Right ventricle myocardium inferior (tissue), 1 donor: ENCODE measurements at regions of chr12 and their contacts with region 1.

Region 1: DNA sequence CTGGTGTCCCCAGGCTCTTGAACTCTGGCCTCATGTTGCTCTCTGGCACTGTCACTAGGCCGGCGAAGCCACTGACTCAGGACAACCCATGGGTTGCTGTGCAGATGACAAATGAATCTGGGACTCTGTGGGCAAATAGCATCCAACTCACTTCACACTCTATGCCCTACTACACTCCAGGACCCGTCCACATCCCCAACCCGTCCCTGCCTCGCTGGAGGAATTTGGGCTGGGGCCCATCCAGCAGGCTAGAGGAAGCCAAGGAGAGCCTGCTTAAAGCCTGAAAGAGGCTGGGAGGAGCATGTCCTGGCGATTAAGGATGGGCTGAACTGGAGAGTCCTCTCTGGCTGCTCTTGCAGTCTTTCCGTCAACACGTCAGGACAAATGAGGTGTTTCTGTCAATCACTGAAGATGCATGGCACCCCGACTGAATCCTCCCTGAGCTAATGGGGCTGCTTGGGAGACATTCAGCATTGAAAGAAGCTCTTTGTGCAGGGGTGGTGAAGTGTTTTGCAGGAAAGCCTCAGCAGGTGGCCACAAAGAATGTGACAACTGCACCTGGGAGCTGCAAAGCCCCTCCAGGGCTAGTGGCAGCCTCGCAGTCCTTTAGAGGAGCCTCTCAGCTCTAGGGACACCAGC is 71.7 kb downstream of the ANO2 start:
- DNase-seq: no peak
- ATAC-seq: no peak

Region 2: DNA sequence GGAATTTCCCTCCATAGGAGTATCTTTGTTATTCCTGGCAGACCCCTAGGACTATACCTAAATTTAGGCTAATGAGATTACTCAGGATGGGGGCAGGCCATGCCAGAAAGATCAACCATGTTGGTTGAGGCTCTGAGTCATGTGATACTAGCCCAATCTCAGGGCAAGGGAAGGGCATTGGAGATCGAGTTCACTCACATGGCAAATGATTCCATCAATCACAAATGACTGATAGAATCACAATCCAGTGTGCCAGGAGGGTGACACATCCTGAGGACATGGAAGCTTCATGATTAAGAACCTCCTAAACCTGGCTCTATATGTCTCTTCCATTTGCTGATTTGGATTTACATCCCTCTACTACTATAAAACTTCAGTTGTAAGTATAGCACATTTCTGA is 259.1 kb before region 1 on chr12:
- intact Hi-C with region 1: no loop called
- DNase-seq: no peak
- ATAC-seq: no peak

Region 3: DNA sequence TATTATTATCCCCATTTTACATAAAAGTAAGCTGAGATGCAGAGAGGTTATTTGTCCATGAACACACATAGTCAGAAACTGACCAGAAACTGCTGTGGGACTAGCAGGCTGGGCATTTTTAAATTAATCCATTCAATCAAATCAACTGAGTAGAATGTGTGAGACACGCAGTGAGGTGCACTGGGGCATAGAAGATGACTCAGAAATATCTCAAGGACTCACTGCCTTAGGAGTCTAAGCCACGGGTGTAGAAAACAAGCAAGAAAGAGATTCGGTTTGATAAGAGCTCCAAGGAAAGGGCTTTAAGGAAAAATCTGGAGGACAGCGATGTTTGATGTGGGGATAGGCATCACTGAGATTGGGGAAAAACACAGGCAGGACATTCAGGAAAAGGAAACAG is 56.2 kb before region 1 on chr12:
- intact Hi-C with region 1: no loop called
- DNase-seq: no peak
- ATAC-seq: no peak

Region 4: GRCh38 chr12:5840944-5841343 is 32.5 kb before region 1 on chr12:
- intact Hi-C with region 1: loop called (anchors 2 kb)
- DNase-seq: no peak
- ATAC-seq: no peak

Region 5: DNA sequence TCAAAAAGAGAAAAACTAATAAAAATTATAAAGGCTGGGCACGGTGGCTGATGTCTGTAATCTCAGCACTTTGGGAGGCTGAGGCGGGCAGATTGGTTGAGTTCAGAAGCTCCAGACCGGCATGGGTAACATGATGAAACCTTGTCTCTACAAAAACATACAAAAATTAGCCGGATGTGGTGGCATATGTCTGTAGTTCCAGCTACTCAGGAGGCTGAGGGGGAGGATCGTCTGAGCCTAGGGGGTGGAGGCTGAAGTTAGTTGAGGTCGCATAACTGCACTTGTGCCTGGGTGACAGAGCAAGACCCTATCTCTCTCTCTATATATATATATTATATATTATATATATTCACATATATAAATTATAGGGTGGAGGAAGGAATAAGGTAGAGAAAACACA is 104.2 kb after region 1 on chr12:
- intact Hi-C with region 1: no loop called
- DNase-seq: no peak
- ATAC-seq: no peak

Region 6: GRCh38 chr12:7695237-7696197 is 1822.1 kb after region 1 on chr12 and contains the start of gene GDF3:
- intact Hi-C with region 1: no loop called
- DNase-seq: no peak
- ATAC-seq: no peak
- total RNA-seq, gene GDF3: not detected